Aorta (tissue), 5 donors: ENCODE measurements at regions of chr16 and their contacts with region 1.

Region 1: GRCh38 chr16:50368410-50369132 is at the start of gene BRD7:
- DNase-seq: peak; percentile 63 to 85
- ATAC-seq: peak; percentile 92
- H3K4me3 ChIP-seq: peak within 1 kb of the TSS; percentile 99 to 100
- H3K27ac ChIP-seq: peak within 1 kb of the TSS; percentile 63 to 75
- H3K4me1 ChIP-seq: peaks cover 0 to 2% of the 10 kb centered on the region in 2 donors
- H3K27me3 ChIP-seq: no peaks in the 10 kb centered on the region
- total RNA-seq, gene BRD7: 64.2 to 90.2 TPM

Region 2: GRCh38 chr16:50024684-50025536 is 343.7 kb before region 1 on chr16 and contains the start of gene CNEP1R1:
- intact Hi-C with region 1: loop called (anchors 5 to 10 kb)
- DNase-seq: peak; percentile 96 to 97
- ATAC-seq: peak; percentile 100
- H3K4me3 ChIP-seq: peak within 1 kb of the TSS; percentile 71 to 92
- H3K27ac ChIP-seq: peak within 1 kb of the TSS in 1 of 2 donors; percentile 20
- H3K4me1 ChIP-seq: no peaks in the 10 kb centered on the region
- H3K27me3 ChIP-seq: no peaks in the 10 kb centered on the region
- total RNA-seq, gene CNEP1R1: 25.0 to 25.3 TPM

Region 3: DNA sequence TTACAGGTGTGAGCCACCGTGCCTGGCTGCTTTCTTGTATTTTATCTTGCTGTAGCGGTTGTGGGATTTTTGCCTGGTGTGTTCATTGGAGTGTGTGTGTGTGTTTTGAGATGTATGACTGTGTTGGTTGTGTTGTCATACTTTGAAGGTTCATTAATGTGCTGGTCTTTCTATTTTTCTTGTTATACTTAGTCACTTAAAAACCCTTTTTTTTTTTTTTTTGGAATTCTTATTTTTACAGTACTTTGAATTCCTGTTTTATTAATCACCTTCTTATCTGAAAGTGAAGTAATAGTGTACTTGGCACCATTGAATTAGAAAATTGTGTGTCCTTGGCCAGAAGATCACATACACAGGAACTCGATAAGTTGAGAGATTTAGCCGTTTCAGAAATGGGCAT is 185.3 kb before region 1 on chr16:
- intact Hi-C with region 1: no loop called
- DNase-seq: no peak
- ATAC-seq: no peak
- H3K4me3 ChIP-seq: no peak overlapping the region
- H3K27ac ChIP-seq: peak overlapping the region in 1 of 2 donors; percentile 10
- H3K4me1 ChIP-seq: peaks cover 3 to 12% of the 10 kb centered on the region in 2 donors
- H3K27me3 ChIP-seq: no peaks in the 10 kb centered on the region

Region 4: DNA sequence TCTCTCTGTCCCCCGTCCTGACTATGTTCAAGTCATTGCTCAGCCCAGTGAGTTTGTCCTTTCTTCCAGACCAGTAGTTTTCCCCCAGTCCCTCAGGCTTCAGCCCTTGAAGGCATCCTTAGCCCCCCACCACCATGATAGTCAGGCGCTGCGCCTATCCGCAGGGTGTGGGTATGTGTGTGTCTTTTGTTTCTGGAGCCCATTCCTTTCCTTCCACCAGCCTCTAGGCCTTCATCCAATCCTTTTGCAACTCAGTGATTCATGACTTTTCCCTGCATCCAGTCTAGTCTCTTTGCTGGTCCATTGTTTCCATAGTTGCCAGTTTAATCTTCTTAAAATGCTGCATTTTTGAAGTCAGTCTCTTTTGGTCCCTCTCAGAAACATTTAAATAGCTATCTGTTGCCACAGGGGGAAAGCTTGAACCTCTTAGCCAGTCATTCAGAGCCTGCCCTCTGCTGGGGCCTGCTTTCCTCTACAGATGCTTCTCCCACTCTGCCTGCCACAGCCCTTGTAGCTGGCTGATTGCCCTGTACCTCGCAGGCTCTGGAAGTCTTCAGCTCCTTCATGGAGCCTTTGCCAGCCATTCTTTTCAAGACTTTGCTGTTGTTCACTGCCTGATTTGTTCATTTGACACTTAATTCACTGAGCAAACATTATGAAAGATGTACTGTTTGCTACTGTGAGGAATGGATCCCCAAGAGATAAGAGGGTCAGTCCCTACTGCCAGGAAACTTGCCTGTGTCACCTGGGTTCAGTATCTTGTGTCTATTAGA is 158.1 kb before region 1 on chr16:
- intact Hi-C with region 1: loop called (anchors 5 to 10 kb)
- DNase-seq: peak; percentile 87 to 89
- ATAC-seq: peak; percentile 89
- H3K4me3 ChIP-seq: no peak overlapping the region
- H3K27ac ChIP-seq: peak overlapping the region in 1 of 2 donors; percentile 32
- H3K4me1 ChIP-seq: peaks cover 0 to 3% of the 10 kb centered on the region in 2 donors
- H3K27me3 ChIP-seq: no peaks in the 10 kb centered on the region

Region 5: GRCh38 chr16:50326949-50327402 is 41.6 kb before region 1 on chr16:
- intact Hi-C with region 1: loop called (anchors 5 kb)
- DNase-seq: no peak
- ATAC-seq: no peak
- H3K4me3 ChIP-seq: no peak overlapping the region
- H3K27ac ChIP-seq: peak overlapping the region in 1 of 2 donors; percentile 33
- H3K4me1 ChIP-seq: peaks cover 0 to 5% of the 10 kb centered on the region in 2 donors
- H3K27me3 ChIP-seq: no peaks in the 10 kb centered on the region

Region 6: DNA sequence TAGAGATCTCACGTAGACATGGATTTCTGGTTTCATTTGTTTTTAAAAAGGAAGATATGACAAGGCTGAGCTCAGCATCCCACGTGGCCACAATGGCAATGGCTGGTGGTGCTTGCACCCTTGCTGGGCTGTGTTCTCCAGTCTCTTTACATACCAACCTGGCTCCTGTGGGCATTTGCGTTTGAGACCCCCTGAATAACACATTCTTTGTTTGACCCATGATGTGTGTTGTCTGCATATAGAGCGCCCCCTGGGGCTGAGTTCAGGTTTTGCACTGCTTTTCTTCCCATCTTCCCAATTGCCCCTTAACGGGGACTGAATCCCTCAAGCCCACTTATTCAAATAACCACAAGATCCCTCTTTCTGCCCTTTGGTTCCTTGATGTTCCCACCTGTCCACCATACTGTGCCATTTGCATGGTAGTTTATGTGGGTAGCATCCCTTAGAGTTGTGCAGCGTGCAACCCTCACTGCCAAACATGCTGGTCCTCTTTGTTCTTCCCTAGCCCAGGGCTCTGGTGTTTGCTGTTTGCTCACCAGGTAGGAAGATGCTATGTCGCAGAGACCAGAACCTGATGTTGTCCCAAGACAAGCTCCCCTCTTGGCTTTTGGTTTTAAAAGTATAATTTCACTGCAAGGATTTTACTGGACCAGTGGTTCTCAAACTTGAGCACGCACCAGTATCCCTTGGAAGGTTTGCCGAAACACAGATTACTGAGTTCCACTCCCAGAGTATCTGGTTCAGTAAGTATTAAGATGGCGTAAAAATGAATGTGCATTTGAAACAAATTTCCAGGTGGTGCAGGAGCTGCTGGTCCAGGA is 141.2 kb after region 1 on chr16:
- intact Hi-C with region 1: loop called in 1 of 2 experiments (anchors 5 kb)
- DNase-seq: no peak
- ATAC-seq: no peak
- H3K4me3 ChIP-seq: no peak overlapping the region
- H3K27ac ChIP-seq: no peak overlapping the region
- H3K4me1 ChIP-seq: no peaks in the 10 kb centered on the region
- H3K27me3 ChIP-seq: no peaks in the 10 kb centered on the region

Region 7: DNA sequence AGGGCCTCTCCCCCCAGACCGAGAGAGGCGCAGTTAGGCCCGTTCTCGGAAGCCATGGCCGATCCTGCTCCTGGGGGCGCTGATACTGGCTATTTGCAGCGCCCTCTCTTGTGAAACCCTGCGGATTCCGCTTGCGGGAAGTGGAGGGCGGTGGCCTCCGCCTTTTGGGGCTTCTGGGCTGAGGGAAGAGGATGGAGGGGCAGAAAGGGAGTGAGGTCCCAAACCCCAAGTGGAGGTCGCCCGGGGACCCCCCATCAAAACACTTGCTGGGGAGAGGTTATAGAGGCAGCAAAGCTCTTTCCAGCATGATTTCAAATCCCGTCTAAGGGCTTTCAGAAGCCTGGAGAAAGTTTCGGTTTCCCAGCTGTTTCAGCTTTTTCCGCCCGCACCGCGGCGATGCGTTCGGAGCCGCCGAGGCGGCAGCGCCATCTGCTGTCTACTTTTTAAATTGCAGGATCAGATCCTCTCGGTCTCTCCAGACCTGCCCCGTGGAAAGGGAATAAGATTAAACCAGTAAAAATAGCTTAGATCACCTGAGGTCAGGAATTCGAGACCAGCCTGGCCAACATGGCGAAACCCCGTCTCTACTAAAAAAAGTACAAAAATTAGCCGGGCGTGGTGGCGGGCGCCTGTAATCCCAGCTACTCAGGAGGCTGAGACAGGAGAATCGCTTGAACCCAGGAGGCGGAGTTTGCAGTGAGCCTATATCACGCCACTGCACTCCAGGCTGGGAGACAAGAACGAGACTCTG is 296.7 kb after region 1 on chr16:
- intact Hi-C with region 1: loop called (anchors 2 to 5 kb)
- DNase-seq: peak; percentile 88 to 94
- ATAC-seq: peak; percentile 89
- H3K4me3 ChIP-seq: no peak overlapping the region
- H3K27ac ChIP-seq: no peak overlapping the region
- H3K4me1 ChIP-seq: no peaks in the 10 kb centered on the region
- H3K27me3 ChIP-seq: no peaks in the 10 kb centered on the region

Region 8: DNA sequence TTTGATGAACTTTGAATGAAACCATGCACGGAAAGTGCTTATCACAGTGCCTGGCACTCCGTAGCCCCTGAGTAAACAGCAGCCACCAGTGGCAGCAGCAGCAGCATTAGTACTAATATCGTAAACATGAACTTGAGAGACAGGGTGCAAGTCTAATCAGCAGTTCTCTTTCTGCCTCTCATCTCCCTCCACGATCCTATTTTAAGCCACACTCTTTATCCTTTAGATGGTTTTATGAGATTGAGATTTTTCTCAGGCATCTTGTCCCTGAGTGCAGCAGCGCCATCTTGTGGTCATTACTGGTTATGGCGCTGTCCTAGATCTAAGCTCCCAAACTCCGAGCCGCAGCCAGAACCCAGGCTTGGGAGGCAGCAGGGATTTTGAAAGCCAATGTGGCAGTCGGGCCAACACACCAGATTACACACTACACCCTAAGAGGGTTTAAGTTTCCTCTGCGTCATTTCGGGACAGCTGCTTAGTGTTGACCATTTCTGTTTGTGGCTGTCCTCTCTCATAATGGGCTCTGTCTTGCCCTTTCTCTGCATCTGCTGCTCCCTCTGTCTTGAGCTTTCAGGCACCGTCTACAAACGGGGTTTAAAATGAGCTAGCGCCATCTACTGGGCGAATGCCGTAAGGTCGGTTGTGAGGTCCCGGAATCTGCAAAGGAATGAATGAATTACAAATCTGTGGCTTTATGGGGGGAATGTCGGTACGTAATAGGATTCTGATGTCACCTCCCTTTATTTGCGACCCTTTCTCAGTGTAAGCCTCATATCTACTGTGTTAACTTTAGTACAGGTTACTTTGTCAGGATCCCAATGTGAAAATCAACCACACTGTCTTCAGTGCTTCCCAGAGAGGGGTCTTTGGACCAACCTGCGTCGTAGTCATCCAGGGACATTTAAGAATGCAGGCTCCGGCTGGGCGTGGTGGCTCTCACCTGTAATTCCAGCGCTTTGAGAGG is 437.8 kb after region 1 on chr16:
- intact Hi-C with region 1: loop called (anchors 10 kb)
- DNase-seq: peak; percentile 86 to 89
- ATAC-seq: peak; percentile 95
- H3K4me3 ChIP-seq: no peak overlapping the region
- H3K27ac ChIP-seq: no peak overlapping the region
- H3K4me1 ChIP-seq: no peaks in the 10 kb centered on the region
- H3K27me3 ChIP-seq: no peaks in the 10 kb centered on the region